MCF 10A (cell line): ENCODE measurements at regions of chr12 and their contacts with region 1.

Region 1: GRCh38 chr12:20463913-20464524 is 95.7 kb downstream of the PDE3A start:
- DNase-seq: peak; percentile 26
- H3K4me3 Mint-ChIP-seq: no peak overlapping the region
- H3K27ac Mint-ChIP-seq: no peak overlapping the region
- H3K4me1 Mint-ChIP-seq: no peaks in the 10 kb centered on the region
- H3K27me3 Mint-ChIP-seq: peaks cover 55% of the 10 kb centered on the region
- CTCF ChIP-seq: peak; percentile 49

Region 2: GRCh38 chr12:20572451-20572850 is 108.4 kb after region 1 on chr12:
- CTCF ChIA-PET with region 1: no interaction called
- POLR2A ChIA-PET with region 1: no interaction called
- intact Hi-C with region 1: no loop called
- DNase-seq: no peak
- H3K4me3 Mint-ChIP-seq: no peak overlapping the region
- H3K27ac Mint-ChIP-seq: no peak overlapping the region
- H3K4me1 Mint-ChIP-seq: no peaks in the 10 kb centered on the region
- H3K27me3 Mint-ChIP-seq: peaks cover 92% of the 10 kb centered on the region
- CTCF ChIP-seq: no peak

Region 3: DNA sequence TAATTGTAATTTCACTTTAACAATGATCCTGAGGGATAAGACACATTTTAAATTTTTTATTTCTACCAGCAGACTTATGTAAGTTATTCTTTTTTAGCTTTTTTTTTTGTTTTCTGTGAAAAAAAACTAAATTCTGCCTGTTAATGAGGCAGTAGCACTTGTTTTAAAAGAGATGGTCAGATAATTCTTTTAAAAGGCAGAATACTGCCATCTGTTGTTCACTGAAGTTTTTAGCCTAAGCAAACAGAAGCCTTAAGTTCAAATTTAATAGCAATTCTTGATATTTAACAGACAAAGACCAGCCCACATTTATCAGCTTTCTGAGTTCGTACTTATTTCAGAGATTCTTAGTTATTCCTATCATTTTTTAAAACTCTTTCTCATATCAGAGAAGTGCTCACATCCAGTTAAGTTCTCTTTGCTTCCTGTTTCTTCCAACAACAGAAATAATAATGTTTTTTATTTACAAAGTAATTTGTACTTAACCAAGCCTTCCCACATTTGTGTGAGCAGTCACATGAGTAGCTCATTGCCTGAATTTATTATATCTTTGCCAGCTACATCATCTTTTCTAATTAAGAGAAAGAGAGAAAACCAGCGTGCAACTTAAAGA is 137.8 kb after region 1 on chr12:
- CTCF ChIA-PET with region 1: interaction called, 13 read pairs
- POLR2A ChIA-PET with region 1: no interaction called
- intact Hi-C with region 1: loop called (anchors 1 kb)
- DNase-seq: peak; percentile 30
- H3K4me3 Mint-ChIP-seq: no peak overlapping the region
- H3K27ac Mint-ChIP-seq: no peak overlapping the region
- H3K4me1 Mint-ChIP-seq: no peaks in the 10 kb centered on the region
- H3K27me3 Mint-ChIP-seq: peaks cover 36% of the 10 kb centered on the region
- CTCF ChIP-seq: peak; percentile 29